ENCODE measurements at regions of chr3 and their contacts with region 1.

Region 1: GRCh38 chr3:70539908-70540307 is 227.5 kb upstream of the MDFIC2 start:
- DNase-seq: no peak
- H3K4me3 ChIP-seq: no peak overlapping the region
- H3K27ac ChIP-seq: no peak overlapping the region
- H3K4me1 ChIP-seq: no peaks in the 10 kb centered on the region
- H3K27me3 ChIP-seq: no peaks in the 10 kb centered on the region
- CTCF ChIP-seq: no peak
- POLR2A ChIP-seq: no peak

Region 2: GRCh38 chr3:70606018-70606417 is 66.1 kb after region 1 on chr3:
- intact Hi-C with region 1: no loop called
- DNase-seq: no peak
- H3K4me3 ChIP-seq: no peak overlapping the region
- H3K27ac ChIP-seq: no peak overlapping the region
- H3K4me1 ChIP-seq: no peaks in the 10 kb centered on the region
- H3K27me3 ChIP-seq: no peaks in the 10 kb centered on the region
- CTCF ChIP-seq: no peak
- POLR2A ChIP-seq: no peak

Region 3: GRCh38 chr3:71652781-71653413 is 1113.0 kb after region 1 on chr3:
- intact Hi-C with region 1: loop called (anchors 10 kb)
- DNase-seq: peak in 1 of 2 donors; percentile 27
- H3K4me3 ChIP-seq: no peak overlapping the region
- H3K27ac ChIP-seq: no peak overlapping the region
- H3K4me1 ChIP-seq: no peaks in the 10 kb centered on the region
- H3K27me3 ChIP-seq: no peaks in the 10 kb centered on the region
- CTCF ChIP-seq: peak; percentile 17 to 59 (median 46)
- POLR2A ChIP-seq: no peak